ENCODE measurements at regions of chr3 and their contacts with region 1.

Region 1: GRCh38 chr3:120417272-120417911 is 33.4 kb downstream of the FSTL1 start:
- DNase-seq: peak; percentile 88 to 92
- ATAC-seq: peak; percentile 91 to 99 (median 94)
- H3K4me3 ChIP-seq: peak overlapping the region; percentile 57
- H3K27ac ChIP-seq: peak overlapping the region; percentile 47
- H3K4me1 ChIP-seq: peaks cover 15% of the 10 kb centered on the region
- H3K27me3 ChIP-seq: no peaks in the 10 kb centered on the region
- CTCF ChIP-seq: peak; percentile 90

Region 2: DNA sequence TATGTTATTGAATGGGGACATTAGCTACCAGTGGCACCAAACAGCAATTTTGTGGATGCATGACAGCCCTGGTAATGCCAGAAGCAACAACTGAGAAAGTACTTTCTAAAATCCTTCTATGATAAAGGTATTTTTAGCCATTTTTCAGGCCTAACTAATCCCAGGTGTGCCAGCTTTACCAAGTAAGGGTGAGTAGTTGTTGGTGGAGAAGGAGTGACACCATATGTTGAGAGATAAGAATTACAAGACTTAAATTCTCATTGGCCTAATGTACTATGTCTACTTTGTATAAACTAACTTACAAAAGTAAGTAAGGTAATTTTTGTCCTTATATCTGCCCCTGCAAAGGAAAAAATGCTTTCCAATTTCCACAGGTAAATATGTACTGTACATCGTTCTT is 736.1 kb before region 1 on chr3:
- intact Hi-C with region 1: no loop called
- DNase-seq: no peak
- ATAC-seq: peak in 1 of 4 donors; percentile 40
- H3K4me3 ChIP-seq: no peak overlapping the region
- H3K27ac ChIP-seq: no peak overlapping the region
- H3K4me1 ChIP-seq: peaks cover 4% of the 10 kb centered on the region
- H3K27me3 ChIP-seq: no peaks in the 10 kb centered on the region
- CTCF ChIP-seq: peak; percentile 62

Region 3: DNA sequence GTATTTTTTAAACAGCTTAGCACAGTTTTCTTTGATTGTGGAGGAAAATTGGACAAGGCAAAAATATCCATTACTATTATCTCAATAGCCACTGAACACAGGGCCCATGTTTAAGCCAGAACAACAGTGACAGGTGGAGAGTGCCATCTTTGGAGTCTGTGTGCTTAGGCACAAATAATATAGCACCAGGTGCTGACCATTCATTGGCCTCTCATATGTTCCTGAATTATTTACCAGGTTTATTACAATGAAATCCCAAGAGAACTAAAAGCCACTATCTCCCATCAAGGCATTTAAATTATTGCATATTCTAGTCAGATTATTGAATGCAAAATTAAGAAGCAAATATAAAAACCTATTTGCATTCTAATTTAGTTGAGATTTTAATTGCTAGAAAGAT is 172.0 kb before region 1 on chr3:
- intact Hi-C with region 1: loop called (anchors 1 to 2 kb)
- DNase-seq: no peak
- ATAC-seq: no peak
- H3K4me3 ChIP-seq: no peak overlapping the region
- H3K27ac ChIP-seq: no peak overlapping the region
- H3K4me1 ChIP-seq: no peaks in the 10 kb centered on the region
- H3K27me3 ChIP-seq: no peaks in the 10 kb centered on the region
- CTCF ChIP-seq: no peak

Region 4: DNA sequence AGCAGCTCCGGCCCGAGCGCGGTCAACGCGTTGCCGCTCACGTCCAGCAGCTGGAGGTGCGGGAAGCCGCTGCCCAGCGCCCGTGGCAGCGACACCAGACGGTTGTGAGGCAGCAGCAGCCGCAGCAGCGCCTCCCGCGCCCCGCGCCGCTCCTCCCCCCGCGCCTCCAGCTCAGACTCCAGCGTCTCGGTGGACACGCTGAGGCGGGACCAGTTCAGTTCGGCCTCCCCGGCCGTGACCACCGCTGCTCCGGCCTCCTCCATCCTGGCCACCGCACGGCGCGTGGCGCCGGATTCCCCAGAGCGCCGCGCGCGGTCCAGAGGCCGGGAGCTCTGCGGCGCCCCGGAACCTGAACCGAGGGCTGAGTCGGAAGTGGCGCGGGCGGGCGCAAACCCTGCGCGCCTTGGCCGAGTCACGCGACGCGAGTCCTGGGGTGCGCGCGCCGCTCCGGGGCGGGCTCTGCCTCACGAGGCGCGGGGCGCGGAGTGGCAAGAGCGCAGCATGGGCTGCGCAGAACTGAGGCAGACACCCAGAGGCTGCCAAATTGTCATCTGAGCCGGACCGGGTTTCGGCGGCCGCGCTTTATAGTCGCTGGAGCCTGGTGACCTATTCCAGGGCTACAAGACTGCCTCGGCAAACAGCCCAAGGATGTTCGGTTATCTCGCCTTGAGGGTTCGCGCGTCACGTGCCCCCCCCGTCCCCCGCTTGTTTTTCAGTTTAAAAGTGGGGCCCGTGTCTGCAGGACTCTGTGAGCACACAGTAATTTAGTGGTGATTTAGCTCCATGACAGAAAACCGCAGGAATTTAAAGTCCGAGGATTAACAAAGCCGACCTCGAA is 68.2 kb before region 1 on chr3 and contains the start of gene LRRC58:
- intact Hi-C with region 1: loop called (anchors 5 kb)
- DNase-seq: peak; percentile 95 to 96
- ATAC-seq: peak; percentile 96 to 98 (median 96)
- H3K4me3 ChIP-seq: peak within 1 kb of the TSS; percentile 89
- H3K27ac ChIP-seq: peak within 1 kb of the TSS; percentile 94
- H3K4me1 ChIP-seq: peaks cover 16% of the 10 kb centered on the region
- H3K27me3 ChIP-seq: no peaks in the 10 kb centered on the region
- CTCF ChIP-seq: peak; percentile 24
- total RNA-seq, gene LRRC58: 5.7 to 8.4 (median 6.9) TPM

Region 5: DNA sequence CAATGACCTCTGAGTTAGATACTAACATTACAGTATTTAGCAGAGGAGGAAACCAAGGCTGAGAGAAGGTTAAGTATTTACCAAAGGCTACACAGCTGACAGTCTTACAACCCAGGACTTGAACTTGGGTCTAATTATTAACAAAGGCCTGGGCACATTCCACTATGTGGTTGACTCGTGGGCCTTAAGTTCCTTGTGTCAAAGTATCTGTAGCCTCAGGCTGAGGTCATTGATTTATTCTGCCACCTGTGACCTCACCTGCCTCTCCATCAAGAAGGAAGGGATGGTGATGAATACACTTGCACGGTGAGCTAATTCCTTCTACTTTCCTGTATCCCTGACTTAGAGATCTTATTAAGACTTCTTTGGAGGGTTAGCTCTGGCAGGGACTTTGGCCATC is 48.4 kb before region 1 on chr3:
- intact Hi-C with region 1: no loop called
- DNase-seq: no peak
- ATAC-seq: no peak
- H3K4me3 ChIP-seq: no peak overlapping the region
- H3K27ac ChIP-seq: no peak overlapping the region
- H3K4me1 ChIP-seq: no peaks in the 10 kb centered on the region
- H3K27me3 ChIP-seq: no peaks in the 10 kb centered on the region
- CTCF ChIP-seq: no peak

Region 6: DNA sequence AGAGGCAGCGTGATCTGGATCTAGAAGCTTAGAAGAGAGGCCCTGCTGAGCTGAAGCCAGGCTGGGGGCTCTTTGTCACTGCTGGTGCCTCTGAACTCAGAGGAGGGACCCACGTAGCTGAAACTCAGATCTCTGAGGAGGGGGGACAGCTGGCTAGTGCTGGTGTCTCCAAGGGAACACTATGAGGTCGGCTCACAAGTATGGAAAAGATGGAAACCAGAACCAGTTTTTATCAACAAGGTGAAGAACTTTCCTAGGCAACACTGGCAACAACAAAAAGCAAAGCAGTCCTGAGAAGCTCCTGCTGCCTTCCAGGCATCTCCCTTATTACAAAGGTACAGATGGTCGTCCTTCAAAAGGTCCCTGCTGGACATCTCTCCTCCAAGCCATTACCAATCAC is 60.4 kb after region 1 on chr3:
- intact Hi-C with region 1: no loop called
- DNase-seq: no peak
- ATAC-seq: no peak
- H3K4me3 ChIP-seq: no peak overlapping the region
- H3K27ac ChIP-seq: no peak overlapping the region
- H3K4me1 ChIP-seq: no peaks in the 10 kb centered on the region
- H3K27me3 ChIP-seq: no peaks in the 10 kb centered on the region
- CTCF ChIP-seq: no peak

Region 7: GRCh38 chr3:120506828-120507774 is 89.7 kb after region 1 on chr3:
- intact Hi-C with region 1: loop called in 1 of 2 experiments (anchors 2 kb)
- DNase-seq: no peak
- ATAC-seq: peak in 2 of 4 donors; percentile 30 to 63
- H3K4me3 ChIP-seq: no peak overlapping the region
- H3K27ac ChIP-seq: no peak overlapping the region
- H3K4me1 ChIP-seq: no peaks in the 10 kb centered on the region
- H3K27me3 ChIP-seq: no peaks in the 10 kb centered on the region
- CTCF ChIP-seq: peak; percentile 53

Region 8: GRCh38 chr3:120558771-120559241 is 141.4 kb after region 1 on chr3:
- intact Hi-C with region 1: loop called in 1 of 2 experiments (anchors 2 kb)
- DNase-seq: peak; percentile 90 to 92
- ATAC-seq: peak; percentile 85 to 91 (median 88)
- H3K4me3 ChIP-seq: peak overlapping the region; percentile 56
- H3K27ac ChIP-seq: peak overlapping the region; percentile 63
- H3K4me1 ChIP-seq: peaks cover 12% of the 10 kb centered on the region
- H3K27me3 ChIP-seq: no peaks in the 10 kb centered on the region
- CTCF ChIP-seq: peak; percentile 99

Region 9: DNA sequence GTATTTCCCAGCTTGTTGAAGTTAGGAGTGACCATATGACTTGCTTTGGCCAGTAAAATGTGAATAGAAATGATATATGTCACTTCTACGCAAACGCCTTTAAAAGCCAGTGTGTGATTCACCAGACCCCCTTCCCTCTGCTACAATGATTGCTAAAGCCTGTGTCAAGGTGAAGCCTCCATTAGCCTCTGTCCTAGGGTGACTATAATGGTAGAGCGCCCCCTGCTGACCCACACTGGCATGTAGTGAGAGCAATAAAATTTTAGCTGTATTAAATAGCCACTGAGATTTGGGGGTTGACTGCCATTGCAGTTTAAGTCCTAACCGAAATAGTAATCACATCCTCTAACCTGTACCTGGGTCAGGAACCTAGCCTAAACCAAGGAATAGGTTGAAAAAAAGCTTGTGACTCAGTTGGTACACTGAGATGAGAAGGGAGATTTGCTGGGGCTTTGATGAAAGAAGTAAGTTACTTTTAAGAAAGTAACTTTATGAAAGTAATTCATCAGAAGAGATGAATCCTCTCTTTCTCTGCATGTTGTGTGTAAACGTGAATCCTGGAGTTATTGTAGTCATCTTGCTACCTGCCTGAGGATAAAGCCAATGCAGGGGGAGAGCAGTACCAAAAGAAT is 377.7 kb after region 1 on chr3:
- intact Hi-C with region 1: loop called in 1 of 2 experiments (anchors 10 kb)
- DNase-seq: peak; percentile 74 to 82
- ATAC-seq: peak; percentile 77 to 96 (median 93)
- H3K4me3 ChIP-seq: no peak overlapping the region
- H3K27ac ChIP-seq: no peak overlapping the region
- H3K4me1 ChIP-seq: no peaks in the 10 kb centered on the region
- H3K27me3 ChIP-seq: no peaks in the 10 kb centered on the region
- CTCF ChIP-seq: peak; percentile 69

Measured in psoas muscle (tissue), 8 donors.